ENCODE measurements at regions of chr1 and their contacts with region 1.

Region 1: GRCh38 chr1:45011837-45012638 is at the start of gene UROD:
- DNase-seq: peak; percentile 54
- H3K4me3 ChIP-seq: peak within 1 kb of the TSS; percentile 77 to 99 (median 94)
- H3K27ac ChIP-seq: peak within 1 kb of the TSS; percentile 80 to 93 (median 82)
- H3K4me1 ChIP-seq: peaks cover 27 to 58% (median 36%) of the 10 kb centered on the region in 3 donors
- H3K27me3 ChIP-seq: no peaks in the 10 kb centered on the region
- CTCF ChIP-seq: peak in 2 of 6 experiments; percentile 3 to 38
- POLR2A ChIP-seq: peak in 1 of 4 donors; percentile 37
- total RNA-seq, gene UROD: 26.8 to 57.8 (median 36.7) TPM

Region 2: DNA sequence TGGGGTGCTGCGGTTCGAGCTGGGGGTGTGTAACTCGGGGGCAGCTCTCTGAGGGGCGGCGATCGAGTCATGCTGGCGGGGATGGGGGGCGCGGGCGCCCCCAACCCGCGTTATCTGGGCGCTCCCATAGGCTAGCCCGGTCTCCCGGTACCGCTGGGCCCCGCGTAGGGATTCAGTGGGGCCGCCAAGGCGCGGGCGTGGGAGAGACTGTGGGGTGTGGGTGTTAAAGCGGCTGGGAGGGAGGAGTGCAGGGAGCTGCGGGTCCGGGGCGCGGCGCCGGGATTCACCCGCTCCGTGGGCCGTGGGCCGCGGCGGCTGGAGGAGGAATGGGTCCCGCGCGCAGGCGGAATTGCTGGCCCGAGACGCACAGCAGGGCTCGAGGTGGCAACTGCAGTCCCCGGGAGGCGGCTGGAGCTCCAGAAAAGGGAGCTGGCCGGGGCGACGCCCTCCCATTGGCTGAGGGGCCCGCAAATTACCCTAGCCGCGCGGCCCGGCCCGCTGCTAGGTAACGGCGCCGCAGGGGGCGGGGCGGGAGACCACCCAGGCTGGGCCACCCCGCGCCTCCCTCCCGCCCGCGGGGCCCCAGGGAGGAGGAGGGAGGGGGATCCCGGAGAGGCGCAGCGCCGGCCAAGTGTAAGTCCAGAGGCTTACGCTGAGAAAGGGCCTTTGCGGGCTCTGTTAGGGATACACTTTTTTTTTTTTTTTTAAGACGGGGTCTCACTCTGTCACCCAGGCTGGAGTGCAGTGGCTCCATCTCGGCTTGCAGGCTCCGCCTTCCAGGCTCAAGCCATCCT is 169.0 kb before region 1 on chr1 and contains the start of gene PTCH2:
- intact Hi-C with region 1: loop called (anchors 10 kb)
- DNase-seq: no peak
- H3K4me3 ChIP-seq: peak within 1 kb of the TSS; percentile 35 to 73 (median 54)
- H3K27ac ChIP-seq: peak within 1 kb of the TSS; percentile 10 to 65 (median 48)
- H3K4me1 ChIP-seq: peaks cover 0 to 15% (median 7%) of the 10 kb centered on the region in 3 donors
- H3K27me3 ChIP-seq: peaks cover 0 to 4% (median 0%) of the 10 kb centered on the region in 4 donors
- CTCF ChIP-seq: no peak
- POLR2A ChIP-seq: peak in 1 of 4 donors; percentile 28
- total RNA-seq, gene PTCH2: 0.09 to 0.19 TPM in 2 of 4 donors, not detected in the others

Region 3: GRCh38 chr1:45303582-45304310 is 291.7 kb after region 1 on chr1:
- intact Hi-C with region 1: loop called (anchors 5 kb)
- DNase-seq: peak; percentile 88
- H3K4me3 ChIP-seq: peak overlapping the region; percentile 67 to 72 (median 69)
- H3K27ac ChIP-seq: peak overlapping the region; percentile 91 to 94 (median 92)
- H3K4me1 ChIP-seq: peaks cover 7 to 19% (median 8%) of the 10 kb centered on the region in 3 donors
- H3K27me3 ChIP-seq: no peaks in the 10 kb centered on the region
- CTCF ChIP-seq: peak; percentile 42 to 73 (median 62)
- POLR2A ChIP-seq: peak in 2 of 4 donors; percentile 48 to 71

Region 4: DNA sequence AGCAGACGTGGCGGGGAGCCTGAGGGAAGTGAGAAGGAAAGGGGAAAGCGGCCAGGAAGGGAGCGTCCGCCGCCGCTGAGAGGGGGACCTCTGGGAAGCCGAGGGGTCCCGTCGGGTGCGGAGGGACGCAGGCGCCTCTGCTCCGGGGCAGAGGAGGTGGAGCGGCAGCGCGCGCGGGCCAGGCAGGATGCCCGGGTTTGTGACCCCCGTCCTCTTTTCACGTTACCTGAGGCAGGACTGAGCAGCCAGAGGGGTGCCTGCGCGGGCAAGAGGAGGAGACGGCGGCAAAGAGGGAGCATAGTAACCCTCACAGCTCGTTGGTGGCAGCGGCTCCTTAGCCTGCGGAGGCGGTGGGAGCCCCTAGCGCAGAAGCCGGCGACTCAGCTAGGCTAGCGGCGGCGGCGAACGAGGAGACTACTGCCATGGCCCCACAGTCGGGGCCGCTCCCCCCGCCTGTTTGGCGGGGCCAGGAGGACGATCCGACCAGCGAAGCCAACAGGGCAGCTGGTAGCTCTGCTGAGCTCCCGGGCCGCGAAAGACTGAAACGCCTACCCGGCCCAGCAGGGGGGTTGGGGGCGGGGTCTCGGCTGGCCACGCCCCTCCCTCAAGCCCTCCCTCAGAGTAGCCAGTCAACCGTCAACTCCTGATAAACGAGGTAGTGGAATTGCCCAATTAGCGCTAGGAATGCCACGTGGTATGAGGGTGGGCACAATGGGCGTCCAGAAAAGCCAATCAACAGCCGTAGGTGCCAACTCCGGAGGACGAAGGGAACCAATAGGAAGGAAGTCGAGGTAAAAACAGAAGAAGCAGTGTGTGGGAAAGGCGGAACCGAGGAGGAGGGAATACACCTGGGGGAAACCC is 478.8 kb after region 1 on chr1 and contains the start of gene TESK2:
- intact Hi-C with region 1: loop called (anchors 5 kb)
- DNase-seq: peak; percentile 94
- H3K4me3 ChIP-seq: peak within 1 kb of the TSS; percentile 72 to 95 (median 85)
- H3K27ac ChIP-seq: peak within 1 kb of the TSS; percentile 89 to 92 (median 91)
- H3K4me1 ChIP-seq: peaks cover 0 to 46% (median 16%) of the 10 kb centered on the region in 3 donors
- H3K27me3 ChIP-seq: no peaks in the 10 kb centered on the region
- CTCF ChIP-seq: peak in 4 of 6 experiments; percentile 44 to 58 (median 54)
- POLR2A ChIP-seq: peak in 2 of 4 donors; percentile 71 to 94
- total RNA-seq, gene TESK2: 4.2 to 8.4 (median 5.9) TPM

Measured in esophagus squamous epithelium (tissue), 5 donors.